BJ (cell line): ENCODE measurements at regions of chr9 and their contacts with region 1.

Region 1: DNA sequence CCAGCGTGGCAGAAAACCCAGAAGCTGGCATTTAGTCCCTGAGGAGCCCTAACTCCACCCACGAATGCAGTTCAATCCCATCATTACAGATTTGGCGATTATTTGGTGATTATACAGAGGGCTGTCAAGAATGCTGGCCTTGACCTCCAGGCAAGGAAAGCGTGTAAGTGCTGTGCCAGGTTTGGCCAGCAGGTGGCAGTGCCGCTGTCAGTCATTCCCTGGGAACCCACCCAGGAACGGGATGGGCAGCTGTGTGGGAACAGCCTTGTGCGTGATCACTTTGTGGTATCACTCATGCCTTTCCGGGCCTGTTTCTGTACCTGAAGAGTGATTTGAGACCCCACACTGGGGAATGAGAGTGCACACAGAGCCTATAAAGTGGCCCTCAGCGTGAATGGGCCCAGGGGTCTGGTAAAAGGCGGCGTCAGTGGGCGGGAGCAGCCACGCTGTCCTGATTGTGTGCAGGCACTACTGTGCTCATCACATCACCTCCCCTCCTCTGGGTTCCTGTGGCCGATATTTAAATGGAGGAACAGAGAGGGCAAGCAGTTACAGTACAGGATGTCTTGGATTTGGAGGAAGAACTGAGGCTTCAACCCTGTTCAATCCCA is 215.6 kb downstream of the ROR2 start:
- DNase-seq: no peak
- H3K4me3 ChIP-seq: no peak overlapping the region
- H3K27me3 ChIP-seq: peaks cover 3% of the 10 kb centered on the region; the same call in 1 of the 2 replicates
- CTCF ChIP-seq: peak; percentile 97

Region 2: DNA sequence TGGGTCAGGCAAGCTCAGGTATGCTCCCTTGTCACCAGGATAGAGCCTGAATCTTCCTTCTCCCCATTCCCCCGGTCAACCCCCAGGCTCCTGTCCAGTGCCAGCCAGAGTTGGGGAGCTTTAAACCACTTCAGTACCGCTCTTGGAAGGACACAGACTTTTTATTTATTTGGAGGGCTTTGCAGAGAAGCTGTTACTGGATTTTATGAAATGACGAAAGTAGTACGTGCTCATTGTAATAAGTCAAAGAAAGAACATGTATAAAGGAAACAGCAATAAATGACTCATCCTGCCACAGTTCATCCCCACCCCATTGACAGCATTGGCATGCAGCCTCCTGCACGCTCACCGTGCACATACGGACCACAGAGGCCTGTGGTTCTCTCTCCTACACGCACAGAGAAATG is 603.0 kb before region 1 on chr9:
- CTCF ChIA-PET with region 1: no interaction called
- POLR2A ChIA-PET with region 1: no interaction called
- DNase-seq: peak; percentile 99
- H3K4me3 ChIP-seq: no peak overlapping the region
- H3K27me3 ChIP-seq: no peaks in the 10 kb centered on the region
- CTCF ChIP-seq: no peak

Region 3: GRCh38 chr9:91710158-91710557 is 24.3 kb before region 1 on chr9:
- CTCF ChIA-PET with region 1: no interaction called
- POLR2A ChIA-PET with region 1: no interaction called
- DNase-seq: no peak
- H3K4me3 ChIP-seq: no peak overlapping the region
- H3K27me3 ChIP-seq: no peaks in the 10 kb centered on the region; the same call in none of the 2 replicates
- CTCF ChIP-seq: no peak

Region 4: DNA sequence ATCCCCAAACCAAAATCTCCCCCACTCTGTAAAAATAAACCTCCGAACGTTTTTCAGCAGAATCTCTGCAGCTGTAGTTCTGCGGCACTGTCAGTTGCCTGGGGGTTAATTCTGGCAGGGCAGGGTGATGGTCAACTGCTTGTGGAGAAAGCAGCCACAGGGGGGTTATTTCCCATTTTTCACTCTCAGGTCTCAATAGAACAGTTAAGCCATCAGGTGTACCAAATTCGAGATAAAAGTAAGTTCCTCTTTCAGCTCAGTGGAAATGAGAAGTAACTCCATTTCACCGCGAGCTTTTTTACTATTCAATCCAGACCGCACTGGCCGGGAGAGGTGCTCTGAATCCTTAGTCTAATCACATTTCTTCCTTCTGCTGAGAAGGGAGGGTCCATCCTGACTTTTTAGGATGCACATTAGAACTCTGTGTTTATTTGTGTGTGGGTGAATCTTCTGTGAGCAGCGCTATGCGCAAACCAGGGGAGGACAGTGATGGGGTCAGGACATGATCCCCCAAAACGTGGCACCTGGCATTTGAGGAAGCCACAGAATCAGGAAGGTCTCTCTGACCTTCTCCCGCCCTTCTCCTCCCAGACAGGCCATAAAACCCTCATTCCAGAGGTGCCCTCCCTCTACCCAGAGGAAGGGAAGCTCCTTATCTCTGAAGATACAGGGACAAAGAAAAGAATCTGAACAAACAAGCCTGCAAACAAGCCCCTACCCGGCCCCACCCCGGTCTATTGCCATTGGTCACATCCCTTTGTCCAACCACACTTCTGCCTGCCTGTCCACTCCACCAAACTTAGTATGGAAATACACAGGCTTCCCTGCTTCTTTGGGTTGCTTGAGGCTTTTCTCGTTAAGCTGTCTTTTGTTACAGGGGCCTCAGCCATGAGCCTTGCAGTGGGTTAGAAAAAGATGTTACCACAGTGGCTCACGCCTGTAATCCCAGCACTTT is 13.4 kb before region 1 on chr9:
- CTCF ChIA-PET with region 1: interaction called, 34 read pairs
- POLR2A ChIA-PET with region 1: no interaction called
- DNase-seq: no peak
- H3K4me3 ChIP-seq: no peak overlapping the region
- H3K27me3 ChIP-seq: 0 out of 2 replicates have a peak, but pooled peaks cover 3% of the 10 kb centered on the region
- CTCF ChIP-seq: no peak

Region 5: DNA sequence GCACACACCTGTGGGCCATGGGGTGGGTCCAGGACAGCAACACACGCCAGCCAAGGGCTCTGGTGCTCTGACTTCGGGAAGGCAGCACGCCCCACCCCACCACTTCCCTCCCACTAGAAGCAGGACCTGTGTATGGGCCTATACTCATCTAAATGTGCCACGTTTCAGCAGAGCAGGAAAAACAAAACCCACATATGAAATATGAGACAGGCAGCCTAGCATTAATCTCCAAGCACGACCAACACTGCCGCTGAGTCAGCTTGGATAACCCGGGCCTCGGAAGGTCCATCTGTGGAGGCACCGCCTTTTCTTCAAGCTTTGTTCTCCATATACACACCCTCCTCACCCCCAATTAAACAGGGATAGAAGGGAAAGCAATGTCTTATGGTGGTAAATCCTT is 12.4 kb after region 1 on chr9:
- CTCF ChIA-PET with region 1: interaction called, 10 read pairs
- POLR2A ChIA-PET with region 1: no interaction called
- DNase-seq: no peak
- H3K4me3 ChIP-seq: no peak overlapping the region
- H3K27me3 ChIP-seq: no peaks in the 10 kb centered on the region
- CTCF ChIP-seq: no peak

Region 6: DNA sequence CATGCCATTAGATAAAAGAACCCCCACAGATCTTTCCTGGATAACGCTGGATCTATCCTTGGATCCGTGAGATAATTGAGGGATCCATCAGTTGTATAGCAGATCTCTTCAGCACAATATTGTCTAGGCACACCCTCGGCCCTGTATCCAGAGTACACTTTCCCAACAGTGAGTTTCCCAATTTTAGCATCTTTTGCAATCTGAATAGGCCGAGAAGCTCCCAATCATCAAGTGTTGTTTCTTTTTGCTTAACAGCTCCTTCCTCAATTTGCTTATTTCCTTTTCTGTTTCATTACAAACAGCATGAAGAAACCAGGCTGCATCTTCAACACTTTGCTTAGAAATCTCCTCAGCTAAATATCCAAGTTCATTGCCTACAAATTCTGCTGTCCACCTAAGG is 385.1 kb after region 1 on chr9:
- CTCF ChIA-PET with region 1: no interaction called
- POLR2A ChIA-PET with region 1: no interaction called
- DNase-seq: no peak
- H3K4me3 ChIP-seq: no peak overlapping the region
- H3K27me3 ChIP-seq: no peaks in the 10 kb centered on the region; the same call in 1 of the 2 replicates
- CTCF ChIP-seq: no peak